ENCODE measurements at regions of chr2 and their contacts with region 1.

Region 1: GRCh38 chr2:219278655-219279516 is at the start of gene DNAJB2:
- DNase-seq: peak; percentile 97 to 100 (median 99)
- ATAC-seq: peak; percentile 74
- H3K4me3 ChIP-seq: peak within 1 kb of the TSS; percentile 56 to 76
- H3K4me3 Mint-ChIP-seq: peak within 1 kb of the TSS; percentile 90
- H3K27ac ChIP-seq: peak within 1 kb of the TSS; percentile 98 to 99
- H3K27ac Mint-ChIP-seq: peak within 1 kb of the TSS; percentile 99
- H3K4me1 ChIP-seq: peaks cover 31% of the 10 kb centered on the region
- H3K4me1 Mint-ChIP-seq: peaks cover 38% of the 10 kb centered on the region
- H3K27me3 ChIP-seq: no peaks in the 10 kb centered on the region
- H3K27me3 Mint-ChIP-seq: no peaks in the 10 kb centered on the region
- CTCF ChIP-seq: no peak
- total RNA-seq, gene DNAJB2: 108 to 123 TPM

Region 2: GRCh38 chr2:218892693-218893348 is 386.1 kb before region 1 on chr2:
- CTCF ChIA-PET with region 1: no interaction called
- POLR2A ChIA-PET with region 1: no interaction called
- intact Hi-C with region 1: loop called in 1 of 2 experiments (anchors 2 kb)
- DNase-seq: peak; percentile 71 to 97 (median 85)
- ATAC-seq: peak; percentile 65
- H3K4me3 ChIP-seq: peak overlapping the region; percentile 36 to 51
- H3K4me3 Mint-ChIP-seq: peak overlapping the region; percentile 72
- H3K27ac ChIP-seq: peak overlapping the region; percentile 68 to 84
- H3K27ac Mint-ChIP-seq: peak overlapping the region; percentile 95
- H3K4me1 ChIP-seq: peaks cover 61% of the 10 kb centered on the region
- H3K4me1 Mint-ChIP-seq: peaks cover 44% of the 10 kb centered on the region
- H3K27me3 ChIP-seq: peaks cover 0 to 7% of the 10 kb centered on the region in 2 experiments
- H3K27me3 Mint-ChIP-seq: no peaks in the 10 kb centered on the region
- CTCF ChIP-seq: peak; percentile 67

Region 3: GRCh38 chr2:219149667-219150066 is 129.2 kb before region 1 on chr2:
- CTCF ChIA-PET with region 1: no interaction called
- POLR2A ChIA-PET with region 1: no interaction called
- intact Hi-C with region 1: no loop called
- DNase-seq: no peak
- ATAC-seq: no peak
- H3K4me3 ChIP-seq: no peak overlapping the region
- H3K4me3 Mint-ChIP-seq: no peak overlapping the region
- H3K27ac ChIP-seq: no peak overlapping the region
- H3K27ac Mint-ChIP-seq: no peak overlapping the region
- H3K4me1 ChIP-seq: no peaks in the 10 kb centered on the region
- H3K4me1 Mint-ChIP-seq: no peaks in the 10 kb centered on the region
- H3K27me3 ChIP-seq: no peaks in the 10 kb centered on the region
- H3K27me3 Mint-ChIP-seq: no peaks in the 10 kb centered on the region
- CTCF ChIP-seq: no peak

Region 4: GRCh38 chr2:219218732-219219701 is 59.9 kb before region 1 on chr2 and contains the start of gene ABCB6:
- CTCF ChIA-PET with region 1: interaction called, 10 read pairs
- POLR2A ChIA-PET with region 1: interaction called, 7 read pairs
- intact Hi-C with region 1: loop called in 1 of 2 experiments (anchors 2 kb)
- DNase-seq: peak; percentile 59 to 92 (median 87)
- ATAC-seq: peak; percentile 91
- H3K4me3 ChIP-seq: peak within 1 kb of the TSS; percentile 50 to 87
- H3K4me3 Mint-ChIP-seq: peak within 1 kb of the TSS; percentile 82
- H3K27ac ChIP-seq: peak within 1 kb of the TSS; percentile 43 to 47
- H3K27ac Mint-ChIP-seq: peak within 1 kb of the TSS; percentile 72
- H3K4me1 ChIP-seq: peaks cover 23% of the 10 kb centered on the region
- H3K4me1 Mint-ChIP-seq: peaks cover 19% of the 10 kb centered on the region
- H3K27me3 ChIP-seq: no peaks in the 10 kb centered on the region
- H3K27me3 Mint-ChIP-seq: no peaks in the 10 kb centered on the region
- CTCF ChIP-seq: no peak
- total RNA-seq, gene ABCB6: 3.4 to 3.5 TPM

Region 5: DNA sequence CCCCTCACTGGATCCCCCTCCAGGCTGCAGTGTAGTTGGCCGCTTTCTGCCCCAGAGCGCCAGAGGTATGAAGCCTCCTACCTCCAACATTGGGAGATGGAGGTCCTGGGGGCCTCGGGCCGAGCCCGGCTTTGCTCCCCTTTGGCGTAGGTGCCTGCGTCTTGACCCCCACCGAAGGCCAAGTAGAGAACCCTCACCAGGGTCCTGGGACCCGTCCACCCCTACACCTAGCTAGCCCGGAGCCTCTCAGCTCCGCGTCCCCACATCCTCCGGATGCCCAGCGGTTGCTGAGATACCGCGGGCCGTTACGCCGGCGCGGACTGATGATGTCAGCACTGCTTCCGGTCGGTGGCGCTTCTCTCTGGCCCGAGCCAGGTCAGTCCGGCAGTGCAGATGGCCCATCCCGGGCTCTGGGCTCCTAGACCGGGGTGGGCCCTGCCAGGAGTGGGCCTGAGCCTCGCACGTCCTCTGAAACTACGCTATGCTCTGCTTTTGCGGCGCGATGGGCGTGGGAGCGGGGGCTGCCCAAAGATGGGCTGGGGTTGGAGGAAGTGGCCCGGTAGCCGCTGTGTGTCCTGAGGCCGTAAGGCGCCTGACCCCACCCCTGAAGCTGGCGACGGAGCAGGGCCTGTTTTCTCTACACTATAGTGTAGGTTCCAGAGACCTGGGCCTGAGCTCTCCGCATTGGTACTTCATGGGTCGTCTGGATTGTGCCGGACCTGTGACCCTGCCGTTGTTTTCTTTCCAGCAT is 33.6 kb before region 1 on chr2 and contains the starts of genes GLB1L and STK16:
- CTCF ChIA-PET with region 1: interaction called, 138 read pairs
- POLR2A ChIA-PET with region 1: interaction called, 41 read pairs
- intact Hi-C with region 1: loop called in 1 of 2 experiments (anchors 1 kb)
- DNase-seq: peak; percentile 67 to 94 (median 87)
- ATAC-seq: peak; percentile 37
- H3K4me3 ChIP-seq: peak within 1 kb of the TSS; percentile 68 to 94
- H3K4me3 Mint-ChIP-seq: peak within 1 kb of the TSS; percentile 94
- H3K27ac ChIP-seq: peak within 1 kb of the TSS; percentile 89 to 96
- H3K27ac Mint-ChIP-seq: peak within 1 kb of the TSS; percentile 99
- H3K4me1 ChIP-seq: peaks cover 58% of the 10 kb centered on the region
- H3K4me1 Mint-ChIP-seq: peaks cover 68% of the 10 kb centered on the region
- H3K27me3 ChIP-seq: no peaks in the 10 kb centered on the region
- H3K27me3 Mint-ChIP-seq: no peaks in the 10 kb centered on the region
- CTCF ChIP-seq: no peak
- total RNA-seq, gene GLB1L: 1.7 to 2.8 TPM
- total RNA-seq, gene STK16: 12.9 to 13.2 TPM

Region 6: DNA sequence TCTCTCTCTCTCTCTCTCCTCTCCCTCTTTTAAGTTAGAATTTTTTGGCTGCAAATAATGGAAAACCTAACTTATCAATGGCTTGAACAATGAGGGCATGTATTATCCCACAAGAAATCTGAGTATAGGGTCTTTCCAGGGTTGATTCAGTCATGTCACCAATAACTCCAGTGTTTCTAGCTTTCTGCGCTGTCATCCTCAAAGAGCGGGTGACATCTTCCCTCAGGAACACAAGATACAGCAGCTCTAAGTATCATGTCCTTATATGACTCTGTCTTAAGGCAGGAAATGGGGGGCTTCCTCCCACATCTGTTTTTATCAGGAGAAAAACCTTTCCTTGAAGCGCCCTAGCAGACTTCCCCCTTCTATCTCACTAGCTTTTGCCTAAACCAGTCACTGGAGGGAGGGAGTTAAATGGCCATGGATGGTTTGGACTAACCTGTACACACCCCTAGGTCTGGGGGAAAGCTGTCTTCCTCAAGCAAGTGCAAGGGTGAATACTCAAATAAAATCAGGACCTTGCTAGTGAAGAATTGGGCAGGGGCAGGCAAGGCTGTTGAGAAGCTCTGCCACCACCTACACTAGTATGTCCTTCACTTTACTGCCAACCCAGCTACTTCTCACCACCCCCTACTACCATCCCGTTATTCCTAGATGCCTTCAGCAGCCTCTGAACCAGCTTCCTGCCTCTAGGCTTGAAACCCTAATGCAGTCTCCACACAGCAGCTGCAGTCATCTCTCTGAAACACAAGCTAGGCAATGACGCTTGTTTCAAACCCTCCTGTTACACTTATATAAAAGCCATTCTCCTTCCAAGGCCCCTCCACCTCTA is 17.6 kb before region 1 on chr2:
- CTCF ChIA-PET with region 1: interaction called, 138 read pairs
- POLR2A ChIA-PET with region 1: interaction called, 7 read pairs
- intact Hi-C with region 1: no loop called
- DNase-seq: no peak
- ATAC-seq: no peak
- H3K4me3 ChIP-seq: no peak overlapping the region
- H3K4me3 Mint-ChIP-seq: no peak overlapping the region
- H3K27ac ChIP-seq: no peak overlapping the region
- H3K27ac Mint-ChIP-seq: no peak overlapping the region
- H3K4me1 ChIP-seq: peaks cover 6% of the 10 kb centered on the region
- H3K4me1 Mint-ChIP-seq: peaks cover 9% of the 10 kb centered on the region
- H3K27me3 ChIP-seq: no peaks in the 10 kb centered on the region
- H3K27me3 Mint-ChIP-seq: peaks cover 3% of the 10 kb centered on the region
- CTCF ChIP-seq: no peak

Measured in CD8-positive, alpha-beta T cell (primary cell).